Heart left ventricle (tissue), 16 donors: ENCODE measurements at regions of chr19 and their contacts with region 1.

Region 1: GRCh38 chr19:39970675-39971379 is at the start of gene PSMC4:
- DNase-seq: peak; percentile 98 to 99 (median 99)
- ATAC-seq: peak; percentile 99 to 100 (median 100)
- H3K4me3 ChIP-seq: peak within 1 kb of the TSS; percentile 67 to 93 (median 85)
- H3K27ac ChIP-seq: peak within 1 kb of the TSS; percentile 40 to 95 (median 90)
- H3K4me1 ChIP-seq: peaks cover 0 to 32% (median 13%) of the 10 kb centered on the region in 12 donors
- H3K27me3 ChIP-seq: no peaks in the 10 kb centered on the region
- CTCF ChIP-seq: peak; percentile 57 to 95 (median 73)
- POLR2A ChIP-seq: peak; percentile 42 to 88
- total RNA-seq, gene PSMC4: 58.5 to 112 (median 78.6) TPM

Region 2: GRCh38 chr19:39557441-39558151 is 413.2 kb before region 1 on chr19:
- intact Hi-C with region 1: loop called in 1 of 10 experiments (anchors 10 kb)
- DNase-seq: no peak
- ATAC-seq: peak in 2 of 4 donors; percentile 31 to 44
- H3K4me3 ChIP-seq: peak overlapping the region in 2 of 12 donors; percentile 16 to 17
- H3K27ac ChIP-seq: peak overlapping the region in 1 of 12 donors; percentile 89
- H3K4me1 ChIP-seq: peaks cover 0 to 45% (median 0%) of the 10 kb centered on the region in 12 donors
- H3K27me3 ChIP-seq: peaks cover 0 to 3% (median 0%) of the 10 kb centered on the region in 9 donors
- CTCF ChIP-seq: no peak
- POLR2A ChIP-seq: no peak

Region 3: GRCh38 chr19:39792999-39793546 is 177.8 kb before region 1 on chr19:
- intact Hi-C with region 1: loop called in 6 of 10 experiments (anchors 2 to 10 kb)
- DNase-seq: peak; percentile 72 to 86 (median 76)
- ATAC-seq: peak; percentile 94 to 99 (median 98)
- H3K4me3 ChIP-seq: peak overlapping the region in 10 of 12 donors; percentile 30 to 79 (median 54)
- H3K27ac ChIP-seq: no peak overlapping the region
- H3K4me1 ChIP-seq: no peaks in the 10 kb centered on the region
- H3K27me3 ChIP-seq: peaks cover 0 to 9% (median 0%) of the 10 kb centered on the region in 9 donors
- CTCF ChIP-seq: peak; percentile 79 to 96 (median 90)
- POLR2A ChIP-seq: no peak

Region 4: GRCh38 chr19:39805104-39805503 is 165.7 kb before region 1 on chr19:
- intact Hi-C with region 1: loop called in 1 of 10 experiments (anchors 10 kb)
- DNase-seq: peak in 1 of 5 donors; percentile 54
- ATAC-seq: peak in 2 of 4 donors; percentile 13 to 46
- H3K4me3 ChIP-seq: no peak overlapping the region
- H3K27ac ChIP-seq: no peak overlapping the region
- H3K4me1 ChIP-seq: no peaks in the 10 kb centered on the region
- H3K27me3 ChIP-seq: peaks cover 0 to 12% (median 0%) of the 10 kb centered on the region in 9 donors
- CTCF ChIP-seq: no peak
- POLR2A ChIP-seq: no peak

Region 5: DNA sequence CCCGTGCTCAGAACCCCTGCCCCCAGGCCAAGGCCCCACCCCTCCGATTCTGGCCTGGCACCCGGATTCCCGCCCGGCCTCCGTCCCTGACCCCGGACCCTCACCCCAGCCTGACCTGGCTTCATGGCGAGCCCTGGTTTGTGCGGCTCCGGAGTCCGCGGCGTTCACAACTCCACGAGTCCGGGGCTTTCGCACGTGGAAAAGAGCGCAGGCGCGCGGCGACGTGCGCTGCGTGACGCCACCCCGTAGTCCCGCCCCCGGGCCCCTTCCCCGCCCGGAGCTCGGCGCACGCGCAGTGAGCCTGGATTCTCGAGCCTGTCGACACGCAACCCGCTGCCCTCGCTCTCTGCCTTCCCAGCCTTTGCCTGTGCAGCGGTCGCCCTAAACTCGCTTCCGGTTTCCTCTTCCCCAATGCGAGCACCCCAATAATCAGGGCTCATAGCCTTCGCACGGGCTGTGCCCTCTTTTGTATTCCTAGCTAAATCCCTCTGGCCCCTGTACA is 124.6 kb before region 1 on chr19 and contains the start of gene FBL:
- intact Hi-C with region 1: loop called in 3 of 10 experiments (anchors 5 to 10 kb)
- DNase-seq: peak; percentile 95 to 99 (median 96)
- ATAC-seq: peak; percentile 96 to 98 (median 96)
- H3K4me3 ChIP-seq: peak within 1 kb of the TSS; percentile 62 to 89 (median 80)
- H3K27ac ChIP-seq: peak within 1 kb of the TSS; percentile 64 to 93 (median 84)
- H3K4me1 ChIP-seq: peaks cover 0 to 48% (median 29%) of the 10 kb centered on the region in 12 donors
- H3K27me3 ChIP-seq: no peaks in the 10 kb centered on the region
- CTCF ChIP-seq: no peak
- POLR2A ChIP-seq: peak in 1 of 2 donors; percentile 92
- total RNA-seq, gene FBL: 44.3 to 94.3 (median 70.5) TPM

Region 6: DNA sequence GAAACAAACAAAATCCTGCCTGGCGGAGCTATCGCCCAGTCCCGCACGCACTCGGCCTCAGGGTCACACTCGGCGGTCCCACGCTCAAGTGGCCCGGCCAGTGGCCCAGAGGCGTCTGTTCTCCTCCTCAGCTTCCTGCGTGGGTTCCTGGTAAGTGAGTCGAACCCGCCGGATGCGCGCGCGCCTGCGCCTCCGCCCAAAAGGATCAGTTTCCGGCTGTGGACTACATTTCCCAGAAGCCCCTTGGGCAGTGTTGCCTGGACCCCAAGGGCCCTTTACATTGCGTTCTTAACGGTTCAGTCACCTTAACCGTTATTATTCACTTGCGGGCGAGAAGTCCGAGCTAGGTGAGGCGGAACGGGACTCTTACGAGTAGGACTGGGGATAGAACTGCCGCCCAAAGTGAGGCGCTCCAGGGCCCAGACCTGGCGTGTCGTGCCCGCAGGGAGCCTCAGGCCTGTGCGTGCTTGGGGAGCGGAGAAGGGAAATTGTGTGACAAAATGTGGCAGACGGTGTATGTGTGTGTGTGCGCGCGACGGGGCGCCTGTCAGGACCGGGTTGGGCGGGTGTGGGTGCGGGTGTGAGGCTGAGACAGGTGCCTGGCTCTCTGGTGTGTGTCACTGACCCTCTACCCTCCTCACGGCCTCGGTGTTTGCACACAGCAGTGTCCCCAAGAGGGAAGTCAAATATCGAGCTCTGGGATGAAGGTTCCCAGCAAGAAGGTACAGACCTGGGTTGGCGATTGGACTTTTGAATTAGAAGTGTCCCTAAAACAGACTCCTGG is 26.2 kb after region 1 on chr19 and contains the start of gene ZNF546:
- intact Hi-C with region 1: loop called in 3 of 10 experiments (anchors 2 kb)
- DNase-seq: peak; percentile 93 to 96 (median 94)
- ATAC-seq: peak; percentile 97 to 99 (median 98)
- H3K4me3 ChIP-seq: peak within 1 kb of the TSS; percentile 49 to 84 (median 74)
- H3K27ac ChIP-seq: peak within 1 kb of the TSS; percentile 73 to 96 (median 89)
- H3K4me1 ChIP-seq: peaks cover 0 to 22% (median 15%) of the 10 kb centered on the region in 12 donors
- H3K27me3 ChIP-seq: no peaks in the 10 kb centered on the region
- CTCF ChIP-seq: no peak
- POLR2A ChIP-seq: peak; percentile 67 to 94
- total RNA-seq, gene ZNF546: 4.2 to 14.4 (median 9.2) TPM

Region 7: GRCh38 chr19:40090241-40091204 is 119.7 kb after region 1 on chr19 and contains the start of gene ZNF780A:
- intact Hi-C with region 1: loop called in 1 of 10 experiments (anchors 2 kb)
- DNase-seq: peak; percentile 79 to 89 (median 84)
- ATAC-seq: peak; percentile 92 to 98 (median 98)
- H3K4me3 ChIP-seq: peak within 1 kb of the TSS; percentile 58 to 91 (median 82)
- H3K27ac ChIP-seq: peak within 1 kb of the TSS; percentile 70 to 97 (median 94)
- H3K4me1 ChIP-seq: peaks cover 0 to 27% (median 14%) of the 10 kb centered on the region in 12 donors
- H3K27me3 ChIP-seq: peaks cover 0 to 4% (median 0%) of the 10 kb centered on the region in 9 donors
- CTCF ChIP-seq: no peak
- POLR2A ChIP-seq: peak in 1 of 2 donors; percentile 46
- total RNA-seq, gene ZNF780A: 3.9 to 17.5 (median 11.0) TPM